PC-9 (cell line): ENCODE measurements at regions of chr15 and their contacts with region 1.

Region 1: DNA sequence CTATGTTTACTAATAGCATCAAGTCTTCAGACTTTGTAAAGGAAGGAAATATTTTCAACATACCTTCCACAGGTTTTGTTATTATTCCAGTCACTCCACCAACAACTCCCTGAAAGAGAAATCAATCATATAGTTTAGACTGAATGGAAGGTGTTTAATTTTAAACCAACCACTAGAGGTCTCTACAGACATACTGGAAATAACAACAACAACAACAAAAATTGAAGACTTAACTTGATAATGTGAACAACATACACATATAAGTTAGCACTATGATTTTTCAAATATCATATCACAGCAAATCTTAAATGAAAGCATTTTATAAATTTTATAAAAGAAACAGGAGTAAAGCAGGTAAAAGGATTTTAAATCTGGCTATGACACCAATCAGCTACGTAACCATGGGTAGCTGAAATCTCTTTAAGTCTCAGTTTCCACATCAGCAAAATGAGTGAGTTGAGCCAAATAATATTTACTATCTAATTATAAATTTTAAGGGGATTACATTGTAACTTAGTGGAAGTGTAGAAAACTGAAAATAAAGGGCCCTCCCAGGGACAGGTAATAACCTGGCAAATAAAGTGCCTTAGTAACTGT is 188.2 kb downstream of the VPS13C start:
- DNase-seq: no peak
- H3K4me3 ChIP-seq: no peak overlapping the region
- H3K27ac ChIP-seq: no peak overlapping the region
- H3K4me1 ChIP-seq: no peaks in the 10 kb centered on the region
- H3K27me3 ChIP-seq: no peaks in the 10 kb centered on the region
- CTCF ChIP-seq: peak; percentile 72

Region 2: DNA sequence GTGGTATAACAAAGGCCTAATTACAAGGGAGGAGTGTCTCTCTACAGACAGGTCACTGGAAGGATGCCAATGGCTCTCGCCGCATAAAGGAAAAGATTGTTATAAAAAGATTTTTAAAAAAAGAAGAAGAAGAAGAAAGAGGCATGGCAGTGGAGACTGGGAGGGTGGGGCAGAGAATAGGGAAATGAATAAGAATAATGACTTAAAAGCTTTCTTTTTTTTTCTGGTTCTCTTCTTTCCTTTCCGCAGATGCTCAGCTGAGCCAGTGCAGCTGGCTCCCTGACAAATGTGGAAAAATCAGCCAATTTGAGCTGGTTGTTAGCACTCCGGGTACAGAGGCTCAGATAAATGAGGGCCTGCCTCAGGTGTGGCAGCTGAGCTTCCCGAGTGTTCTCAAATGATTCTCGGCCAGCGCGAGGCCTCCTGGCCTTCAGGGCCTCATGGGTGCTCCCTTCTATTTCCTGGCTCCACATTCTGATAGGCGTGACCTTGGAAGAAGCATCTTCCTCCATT is 877.0 kb before region 1 on chr15:
- CTCF ChIA-PET with region 1: no interaction called
- POLR2A ChIA-PET with region 1: no interaction called
- intact Hi-C with region 1: no loop called
- DNase-seq: no peak
- H3K4me3 ChIP-seq: no peak overlapping the region
- H3K27ac ChIP-seq: no peak overlapping the region
- H3K4me1 ChIP-seq: peaks cover 22% of the 10 kb centered on the region
- H3K27me3 ChIP-seq: no peaks in the 10 kb centered on the region
- CTCF ChIP-seq: no peak

Region 3: DNA sequence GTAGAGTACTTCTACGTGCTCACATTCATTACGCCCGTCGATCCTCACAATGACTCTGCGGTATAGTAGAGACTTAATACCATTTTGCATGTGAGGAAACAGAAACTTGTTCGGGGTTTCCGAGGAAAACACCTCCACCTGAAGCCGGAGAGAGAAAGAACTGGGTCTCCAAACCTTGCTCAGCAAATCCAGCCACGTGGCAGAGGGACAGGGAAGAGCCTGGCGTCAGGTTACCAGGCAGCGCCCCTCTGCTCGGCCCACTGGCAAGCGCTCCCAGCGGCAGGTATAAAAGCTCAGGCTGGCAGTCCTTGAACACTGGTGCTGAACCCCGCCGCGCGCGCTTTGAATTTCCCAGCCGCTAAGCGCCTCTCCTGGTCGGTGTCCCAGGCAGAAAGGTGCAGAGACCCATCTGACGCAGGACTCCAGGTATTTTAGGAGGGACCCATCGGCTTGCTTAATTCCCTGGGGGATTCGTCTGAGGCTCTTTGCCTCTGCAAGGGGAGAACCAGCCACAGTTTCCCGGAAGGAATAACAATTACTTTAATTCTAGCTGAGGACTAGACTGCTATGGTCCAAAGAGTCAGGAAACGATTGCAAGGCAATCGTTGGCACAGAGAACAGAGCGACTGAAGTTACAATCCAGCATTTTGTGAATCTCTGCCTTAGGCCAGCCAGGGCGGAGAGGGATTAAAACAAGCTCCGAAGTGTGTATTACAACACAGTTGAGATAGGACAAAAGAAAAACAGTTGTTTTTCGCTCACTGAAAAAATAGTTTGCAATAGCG is 194.8 kb after region 1 on chr15 and contains the start of gene C2CD4A:
- CTCF ChIA-PET with region 1: no interaction called
- POLR2A ChIA-PET with region 1: no interaction called
- intact Hi-C with region 1: loop called (anchors 2 kb)
- DNase-seq: peak in 1 of 2 experiments; percentile 72
- H3K4me3 ChIP-seq: no peak within 1 kb of the TSS
- H3K27ac ChIP-seq: no peak within 1 kb of the TSS
- H3K4me1 ChIP-seq: peaks cover 56% of the 10 kb centered on the region
- H3K27me3 ChIP-seq: no peaks in the 10 kb centered on the region
- CTCF ChIP-seq: no peak
- total RNA-seq, gene C2CD4A: 0.09 TPM in 1 of 2 replicates, not detected in the other

Region 4: DNA sequence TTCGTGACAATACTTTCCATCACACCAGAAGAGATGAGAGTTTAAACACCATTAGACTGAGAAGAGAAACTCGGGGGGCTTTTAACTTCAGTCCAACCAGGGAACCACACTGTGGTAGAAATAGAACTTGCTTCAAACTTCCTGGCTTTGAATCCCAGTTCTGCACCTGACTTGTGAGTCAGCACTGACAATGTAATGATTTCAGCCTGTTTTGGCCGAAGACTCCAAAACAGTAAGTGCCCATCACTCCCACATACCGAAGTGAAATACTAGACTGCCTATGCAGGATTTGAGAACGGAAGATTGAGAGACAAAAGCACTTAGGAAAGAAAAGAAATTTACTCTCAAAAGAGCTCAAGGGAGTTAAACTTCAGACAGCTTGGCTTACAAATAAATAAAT is 266.1 kb after region 1 on chr15:
- CTCF ChIA-PET with region 1: no interaction called
- POLR2A ChIA-PET with region 1: no interaction called
- intact Hi-C with region 1: loop called (anchors 5 kb)
- DNase-seq: no peak
- H3K4me3 ChIP-seq: no peak overlapping the region
- H3K27ac ChIP-seq: no peak overlapping the region
- H3K4me1 ChIP-seq: no peaks in the 10 kb centered on the region; the same call in 1 of the 2 replicates
- H3K27me3 ChIP-seq: no peaks in the 10 kb centered on the region
- CTCF ChIP-seq: no peak

Region 5: GRCh38 chr15:62254137-62254934 is 382.3 kb after region 1 on chr15:
- CTCF ChIA-PET with region 1: no interaction called
- POLR2A ChIA-PET with region 1: no interaction called
- intact Hi-C with region 1: loop called (anchors 1 kb)
- DNase-seq: peak in 1 of 2 experiments; percentile 63
- H3K4me3 ChIP-seq: no peak overlapping the region
- H3K27ac ChIP-seq: no peak overlapping the region
- H3K4me1 ChIP-seq: no peaks in the 10 kb centered on the region
- H3K27me3 ChIP-seq: no peaks in the 10 kb centered on the region
- CTCF ChIP-seq: peak; percentile 76

Region 6: GRCh38 chr15:62306851-62307504 is 435.0 kb after region 1 on chr15:
- CTCF ChIA-PET with region 1: no interaction called
- POLR2A ChIA-PET with region 1: no interaction called
- intact Hi-C with region 1: loop called (anchors 5 kb)
- DNase-seq: peak; percentile 29 to 38
- H3K4me3 ChIP-seq: no peak overlapping the region
- H3K27ac ChIP-seq: no peak overlapping the region
- H3K4me1 ChIP-seq: no peaks in the 10 kb centered on the region
- H3K27me3 ChIP-seq: no peaks in the 10 kb centered on the region
- CTCF ChIP-seq: peak; percentile 73